Activated CD4-positive, alpha-beta T cell treated with anti-CD3 and anti-CD28 coated beads for 36 hours (primary cell): ENCODE measurements at regions of chr18 and their contacts with region 1.

Region 1: DNA sequence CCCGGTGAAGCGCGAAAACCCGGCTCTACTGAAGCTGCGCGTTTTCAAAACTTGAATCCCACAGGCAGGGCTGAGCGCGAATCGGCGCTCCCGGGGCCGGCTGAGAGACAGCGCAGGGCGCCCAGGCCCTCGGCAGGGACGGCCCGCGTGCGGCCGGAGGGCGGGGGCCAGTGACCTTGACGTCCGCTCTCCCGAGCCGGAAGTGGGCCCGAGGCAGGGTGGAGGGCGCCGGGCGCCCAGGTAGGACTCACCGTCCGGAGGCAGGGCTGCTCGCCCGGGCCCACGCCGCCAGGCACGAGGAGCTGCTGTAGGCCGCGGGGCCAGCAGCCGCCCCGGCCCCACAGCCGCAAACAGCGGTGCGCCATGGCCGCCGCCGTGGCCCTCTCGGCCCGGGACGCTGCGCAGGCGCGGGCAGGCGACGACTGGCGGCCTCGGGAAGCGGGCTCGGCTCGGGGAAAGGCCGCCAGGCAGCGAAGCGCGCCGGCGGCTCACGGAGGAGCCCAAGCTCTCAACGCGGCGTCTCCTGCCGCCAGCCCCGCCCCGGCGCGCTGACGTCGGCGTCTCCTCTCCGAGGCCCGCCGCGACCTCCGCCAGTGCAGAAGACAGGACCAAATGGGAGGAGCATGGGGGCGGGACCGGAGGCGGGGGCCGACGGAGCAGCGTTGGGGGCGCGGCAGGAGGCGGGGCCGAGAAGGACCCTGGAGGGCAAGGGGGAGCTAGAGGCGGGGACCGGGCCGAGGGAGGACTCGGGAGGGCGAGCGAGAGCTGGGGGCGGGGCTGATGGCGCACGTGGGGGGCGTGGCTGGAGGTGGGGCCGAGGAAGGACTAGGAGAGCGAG is at the start of gene AFG3L2:
- DNase-seq: peak; percentile 100
- ATAC-seq: peak; percentile 91
- H3K4me3 Mint-ChIP-seq: peak within 1 kb of the TSS; percentile 92
- H3K27ac Mint-ChIP-seq: peak within 1 kb of the TSS; percentile 88
- H3K4me1 Mint-ChIP-seq: peaks cover 43% of the 10 kb centered on the region
- H3K27me3 Mint-ChIP-seq: no peaks in the 10 kb centered on the region
- total RNA-seq, gene AFG3L2: 38.0 to 56.5 TPM

Region 2: GRCh38 chr18:11851146-11851805 is 525.7 kb before region 1 on chr18 and contains the start of gene CHMP1B:
- CTCF ChIA-PET with region 1: no interaction called
- POLR2A ChIA-PET with region 1: no interaction called
- intact Hi-C with region 1: loop called in 1 of 2 experiments (anchors 1 kb)
- DNase-seq: peak; percentile 98
- ATAC-seq: peak; percentile 92
- H3K4me3 Mint-ChIP-seq: peak within 1 kb of the TSS; percentile 91
- H3K27ac Mint-ChIP-seq: peak within 1 kb of the TSS; percentile 99
- H3K4me1 Mint-ChIP-seq: peaks cover 25% of the 10 kb centered on the region
- H3K27me3 Mint-ChIP-seq: no peaks in the 10 kb centered on the region
- total RNA-seq, gene CHMP1B: 20.4 to 20.9 TPM

Region 3: GRCh38 chr18:12308386-12309100 is 68.4 kb before region 1 on chr18:
- CTCF ChIA-PET with region 1: no interaction called
- POLR2A ChIA-PET with region 1: no interaction called
- intact Hi-C with region 1: loop called in 1 of 2 experiments (anchors 1 kb)
- DNase-seq: peak; percentile 64
- ATAC-seq: peak; percentile 72
- H3K4me3 Mint-ChIP-seq: peak overlapping the region; percentile 56
- H3K27ac Mint-ChIP-seq: no peak overlapping the region
- H3K4me1 Mint-ChIP-seq: peaks cover 10% of the 10 kb centered on the region
- H3K27me3 Mint-ChIP-seq: peaks cover 40% of the 10 kb centered on the region

Region 4: DNA sequence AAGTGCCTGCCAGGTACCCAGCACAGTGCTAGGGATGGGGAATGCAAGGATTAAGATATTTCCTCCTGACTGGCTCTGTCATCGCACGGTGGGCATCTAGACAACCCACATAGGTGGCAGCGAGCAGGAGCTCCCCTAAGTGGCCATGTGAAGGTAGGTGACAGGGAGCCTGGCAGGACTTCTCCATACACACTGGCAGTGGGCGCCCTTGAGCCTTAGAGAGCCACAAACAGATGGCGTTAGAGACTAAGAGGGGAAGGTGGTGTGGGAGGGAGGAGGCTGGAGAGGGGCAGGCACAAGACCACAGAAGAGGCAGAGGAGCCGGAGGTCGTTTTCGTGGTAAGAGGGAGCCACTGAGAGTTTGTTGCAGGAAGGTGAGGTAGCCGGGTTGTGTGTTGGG is 46.0 kb after region 1 on chr18:
- CTCF ChIA-PET with region 1: no interaction called
- POLR2A ChIA-PET with region 1: no interaction called
- intact Hi-C with region 1: no loop called
- DNase-seq: peak; percentile 43
- ATAC-seq: no peak
- H3K4me3 Mint-ChIP-seq: no peak overlapping the region
- H3K27ac Mint-ChIP-seq: no peak overlapping the region
- H3K4me1 Mint-ChIP-seq: peaks cover 5% of the 10 kb centered on the region
- H3K27me3 Mint-ChIP-seq: peaks cover 7% of the 10 kb centered on the region

Region 5: GRCh38 chr18:12702221-12703095 is 325.5 kb after region 1 on chr18 and contains the starts of genes CEP76 and PSMG2:
- CTCF ChIA-PET with region 1: interaction called, 5 read pairs
- POLR2A ChIA-PET with region 1: interaction called, 10 read pairs
- intact Hi-C with region 1: loop called (anchors 1 kb)
- DNase-seq: peak; percentile 90
- ATAC-seq: peak; percentile 85
- H3K4me3 Mint-ChIP-seq: peak within 1 kb of the TSS; percentile 96
- H3K27ac Mint-ChIP-seq: peak within 1 kb of the TSS; percentile 96
- H3K4me1 Mint-ChIP-seq: peaks cover 30% of the 10 kb centered on the region
- H3K27me3 Mint-ChIP-seq: no peaks in the 10 kb centered on the region
- total RNA-seq, gene CEP76: 12.5 to 13.9 TPM
- total RNA-seq, gene PSMG2: 113 to 118 TPM

Region 6: GRCh38 chr18:12726774-12727550 is 350.0 kb after region 1 on chr18:
- CTCF ChIA-PET with region 1: no interaction called
- POLR2A ChIA-PET with region 1: no interaction called
- intact Hi-C with region 1: no loop called
- DNase-seq: peak; percentile 66
- ATAC-seq: peak; percentile 73
- H3K4me3 Mint-ChIP-seq: no peak overlapping the region
- H3K27ac Mint-ChIP-seq: no peak overlapping the region
- H3K4me1 Mint-ChIP-seq: peaks cover 3% of the 10 kb centered on the region
- H3K27me3 Mint-ChIP-seq: no peaks in the 10 kb centered on the region

Region 7: GRCh38 chr18:12947355-12948041 is 570.6 kb after region 1 on chr18 and contains the start of gene SEH1L:
- CTCF ChIA-PET with region 1: no interaction called
- POLR2A ChIA-PET with region 1: interaction called, 6 read pairs
- intact Hi-C with region 1: loop called (anchors 1 kb)
- DNase-seq: peak; percentile 100
- ATAC-seq: peak; percentile 86
- H3K4me3 Mint-ChIP-seq: peak within 1 kb of the TSS; percentile 89
- H3K27ac Mint-ChIP-seq: peak within 1 kb of the TSS; percentile 97
- H3K4me1 Mint-ChIP-seq: peaks cover 34% of the 10 kb centered on the region
- H3K27me3 Mint-ChIP-seq: no peaks in the 10 kb centered on the region
- total RNA-seq, gene SEH1L: 100 to 107 TPM

Region 8: GRCh38 chr18:13726232-13726971 is 1349.5 kb after region 1 on chr18 and contains the starts of genes FAM210A and RNMT:
- CTCF ChIA-PET with region 1: no interaction called
- POLR2A ChIA-PET with region 1: no interaction called
- intact Hi-C with region 1: loop called in 1 of 2 experiments (anchors 1 kb)
- DNase-seq: peak; percentile 97
- ATAC-seq: peak; percentile 94
- H3K4me3 Mint-ChIP-seq: peak within 1 kb of the TSS; percentile 84
- H3K27ac Mint-ChIP-seq: peak within 1 kb of the TSS; percentile 96
- H3K4me1 Mint-ChIP-seq: peaks cover 50% of the 10 kb centered on the region
- H3K27me3 Mint-ChIP-seq: no peaks in the 10 kb centered on the region
- total RNA-seq, gene FAM210A: 46.8 to 56.4 TPM
- total RNA-seq, gene RNMT: 61.2 to 64.3 TPM